B cell (primary cell): ENCODE measurements at regions of chr7 and their contacts with region 1.

Region 1: GRCh38 chr7:155598810-155599210 is 45.7 kb upstream of the RBM33 start:
- DNase-seq: peak; percentile 81
- ATAC-seq: peak; percentile 80
- H3K4me3 ChIP-seq: no peak overlapping the region
- H3K4me3 Mint-ChIP-seq: no peak overlapping the region
- H3K27ac ChIP-seq: no peak overlapping the region
- H3K27ac Mint-ChIP-seq: no peak overlapping the region
- H3K4me1 ChIP-seq: peaks cover 3 to 4% of the 10 kb centered on the region in 2 donors
- H3K4me1 Mint-ChIP-seq: peaks cover 3% of the 10 kb centered on the region
- H3K27me3 ChIP-seq: peaks cover 0 to 10% (median 8%) of the 10 kb centered on the region in 4 experiments
- H3K27me3 Mint-ChIP-seq: peaks cover 29% of the 10 kb centered on the region
- CTCF ChIP-seq: peak; percentile 99

Region 2: DNA sequence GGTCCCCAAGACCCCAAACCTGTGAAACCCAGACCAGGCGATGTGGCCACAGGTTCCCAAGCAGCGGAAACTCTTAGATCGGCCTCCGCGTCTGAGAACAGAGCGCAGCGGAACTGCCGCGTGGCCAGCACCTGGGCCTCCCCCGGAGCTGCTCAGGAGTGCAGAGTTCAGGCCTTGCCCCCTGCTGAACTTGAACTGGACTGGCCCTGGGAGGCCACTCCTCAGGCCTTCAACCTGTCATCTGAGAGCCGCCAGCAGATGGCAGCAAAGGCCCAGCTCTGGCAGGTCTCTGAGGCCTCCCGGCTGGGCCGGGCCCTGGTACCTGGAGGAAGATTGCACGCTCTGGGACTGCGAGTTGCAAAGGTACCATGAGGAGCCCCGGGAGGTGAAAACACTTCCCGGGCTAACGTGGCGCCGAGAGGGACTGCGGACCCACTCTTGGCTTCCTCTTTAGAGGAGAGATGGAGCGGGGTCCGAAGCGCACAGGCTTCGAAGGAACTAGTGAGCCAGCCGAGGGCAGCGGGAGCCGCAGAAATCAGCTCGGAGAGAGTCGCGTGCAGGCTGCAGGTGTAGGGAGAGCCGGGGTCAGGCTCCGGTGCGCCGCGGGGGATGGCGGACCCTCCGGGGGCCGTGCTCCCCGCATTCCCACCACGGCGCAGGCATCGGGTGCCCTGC is 685.0 kb before region 1 on chr7:
- CTCF ChIA-PET with region 1: interaction called, 5 read pairs
- POLR2A ChIA-PET with region 1: no interaction called
- intact Hi-C with region 1: loop called (anchors 5 kb)
- DNase-seq: peak; percentile 86
- ATAC-seq: peak; percentile 97
- H3K4me3 ChIP-seq: peak overlapping the region in 4 of 5 experiments; percentile 38 to 64 (median 50)
- H3K4me3 Mint-ChIP-seq: peak overlapping the region; percentile 92
- H3K27ac ChIP-seq: no peak overlapping the region
- H3K27ac Mint-ChIP-seq: no peak overlapping the region
- H3K4me1 ChIP-seq: peaks cover 7 to 9% of the 10 kb centered on the region in 2 donors
- H3K4me1 Mint-ChIP-seq: peaks cover 5% of the 10 kb centered on the region
- H3K27me3 ChIP-seq: peaks cover 0 to 20% (median 9%) of the 10 kb centered on the region in 4 experiments
- H3K27me3 Mint-ChIP-seq: peaks cover 45% of the 10 kb centered on the region
- CTCF ChIP-seq: peak; percentile 96

Region 3: GRCh38 chr7:155090684-155091083 is 508.1 kb before region 1 on chr7:
- CTCF ChIA-PET with region 1: no interaction called
- POLR2A ChIA-PET with region 1: no interaction called
- intact Hi-C with region 1: no loop called
- DNase-seq: no peak
- ATAC-seq: no peak
- H3K4me3 ChIP-seq: no peak overlapping the region
- H3K4me3 Mint-ChIP-seq: no peak overlapping the region
- H3K27ac ChIP-seq: no peak overlapping the region
- H3K27ac Mint-ChIP-seq: no peak overlapping the region
- H3K4me1 ChIP-seq: no peaks in the 10 kb centered on the region
- H3K4me1 Mint-ChIP-seq: no peaks in the 10 kb centered on the region
- H3K27me3 ChIP-seq: peaks cover 0 to 3% (median 0%) of the 10 kb centered on the region in 4 experiments
- H3K27me3 Mint-ChIP-seq: peaks cover 19% of the 10 kb centered on the region
- CTCF ChIP-seq: no peak

Region 4: DNA sequence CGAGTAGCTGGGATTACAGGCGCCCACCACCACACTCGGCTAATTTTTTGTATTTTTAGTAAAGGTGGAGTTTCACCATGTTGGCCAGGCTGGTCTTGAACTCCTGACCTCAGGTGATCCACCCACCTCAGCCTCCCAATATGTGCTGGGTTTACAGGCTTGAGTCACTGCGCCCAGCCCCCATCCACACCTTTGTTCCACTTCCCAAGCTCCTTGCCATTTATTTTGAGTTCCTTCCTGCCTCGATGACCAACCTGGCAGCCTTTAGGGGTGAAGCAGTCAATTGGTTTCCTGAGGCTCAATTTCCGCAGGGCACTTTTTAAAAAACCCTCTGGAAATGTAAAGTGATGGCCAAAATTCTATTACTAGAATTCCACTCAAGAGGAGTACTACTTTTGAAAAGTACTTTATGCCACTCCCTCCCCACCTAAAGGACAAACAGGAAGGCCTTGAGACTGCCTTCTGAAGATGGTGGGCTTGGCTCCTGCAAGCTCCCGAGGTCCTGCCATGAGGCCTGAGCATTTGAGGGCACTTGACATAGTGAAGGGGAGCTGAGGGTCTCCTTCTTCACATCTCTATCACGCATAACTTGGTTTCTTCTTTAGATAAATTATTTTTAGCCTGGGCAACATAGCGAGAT is 13.1 kb after region 1 on chr7:
- CTCF ChIA-PET with region 1: interaction called, 15 read pairs
- POLR2A ChIA-PET with region 1: no interaction called
- intact Hi-C with region 1: no loop called
- DNase-seq: no peak
- ATAC-seq: no peak
- H3K4me3 ChIP-seq: no peak overlapping the region
- H3K4me3 Mint-ChIP-seq: no peak overlapping the region
- H3K27ac ChIP-seq: no peak overlapping the region
- H3K27ac Mint-ChIP-seq: no peak overlapping the region
- H3K4me1 ChIP-seq: peaks cover 0 to 3% of the 10 kb centered on the region in 2 donors
- H3K4me1 Mint-ChIP-seq: peaks cover 15% of the 10 kb centered on the region
- H3K27me3 ChIP-seq: peaks cover 0 to 4% (median 0%) of the 10 kb centered on the region in 4 experiments
- H3K27me3 Mint-ChIP-seq: peaks cover 9% of the 10 kb centered on the region
- CTCF ChIP-seq: no peak

Region 5: DNA sequence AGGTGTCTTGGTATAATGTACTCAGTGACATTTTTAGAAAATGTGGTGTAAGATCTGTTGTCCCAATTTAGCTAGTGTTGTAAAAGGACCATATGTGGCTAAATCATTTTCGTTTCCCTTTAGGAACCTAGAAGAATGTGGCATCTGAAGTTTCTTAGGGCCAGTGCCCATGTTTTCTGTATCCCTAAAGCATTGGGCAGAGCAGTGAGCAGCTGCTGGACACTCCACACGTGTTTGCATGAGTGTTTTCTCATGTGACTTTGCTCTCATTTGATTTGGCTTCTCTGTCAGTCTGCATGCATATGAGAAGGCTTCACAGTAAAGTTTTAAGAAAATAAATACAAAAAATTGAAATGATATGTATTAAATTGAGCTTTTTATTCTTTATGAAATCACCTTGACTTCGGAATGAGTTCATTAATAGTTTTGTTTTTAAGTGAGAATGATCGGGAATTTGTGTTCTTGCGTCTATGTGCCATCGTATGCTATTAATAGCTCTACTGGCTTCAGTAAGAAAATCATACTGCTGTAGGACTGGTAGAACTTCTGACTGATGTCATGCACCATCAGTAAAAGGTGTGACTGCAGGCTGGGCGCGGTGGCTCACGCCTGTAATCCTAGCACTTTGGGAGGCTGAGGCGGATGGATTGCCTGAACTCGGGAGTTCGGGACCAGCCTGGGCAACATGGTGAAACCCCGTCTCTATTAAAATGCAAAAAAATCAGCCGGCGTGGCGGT is 107.0 kb after region 1 on chr7:
- CTCF ChIA-PET with region 1: interaction called, 10 read pairs
- POLR2A ChIA-PET with region 1: no interaction called
- intact Hi-C with region 1: no loop called
- DNase-seq: no peak
- ATAC-seq: no peak
- H3K4me3 ChIP-seq: no peak overlapping the region
- H3K4me3 Mint-ChIP-seq: no peak overlapping the region
- H3K27ac ChIP-seq: no peak overlapping the region
- H3K27ac Mint-ChIP-seq: no peak overlapping the region
- H3K4me1 ChIP-seq: peaks cover 9 to 11% of the 10 kb centered on the region in 2 donors
- H3K4me1 Mint-ChIP-seq: peaks cover 2% of the 10 kb centered on the region
- H3K27me3 ChIP-seq: no peaks in the 10 kb centered on the region
- H3K27me3 Mint-ChIP-seq: no peaks in the 10 kb centered on the region
- CTCF ChIP-seq: no peak

Region 6: GRCh38 chr7:155738652-155739537 is 140.1 kb after region 1 on chr7:
- CTCF ChIA-PET with region 1: interaction called, 242 read pairs
- POLR2A ChIA-PET with region 1: interaction called, 3 read pairs
- intact Hi-C with region 1: loop called (anchors 1 kb)
- DNase-seq: peak; percentile 81
- ATAC-seq: peak; percentile 36
- H3K4me3 ChIP-seq: no peak overlapping the region
- H3K4me3 Mint-ChIP-seq: no peak overlapping the region
- H3K27ac ChIP-seq: no peak overlapping the region
- H3K27ac Mint-ChIP-seq: peak overlapping the region; percentile 7
- H3K4me1 ChIP-seq: peaks cover 3 to 7% of the 10 kb centered on the region in 2 donors
- H3K4me1 Mint-ChIP-seq: peaks cover 44% of the 10 kb centered on the region
- H3K27me3 ChIP-seq: no peaks in the 10 kb centered on the region
- H3K27me3 Mint-ChIP-seq: no peaks in the 10 kb centered on the region
- CTCF ChIP-seq: peak; percentile 81

Region 7: DNA sequence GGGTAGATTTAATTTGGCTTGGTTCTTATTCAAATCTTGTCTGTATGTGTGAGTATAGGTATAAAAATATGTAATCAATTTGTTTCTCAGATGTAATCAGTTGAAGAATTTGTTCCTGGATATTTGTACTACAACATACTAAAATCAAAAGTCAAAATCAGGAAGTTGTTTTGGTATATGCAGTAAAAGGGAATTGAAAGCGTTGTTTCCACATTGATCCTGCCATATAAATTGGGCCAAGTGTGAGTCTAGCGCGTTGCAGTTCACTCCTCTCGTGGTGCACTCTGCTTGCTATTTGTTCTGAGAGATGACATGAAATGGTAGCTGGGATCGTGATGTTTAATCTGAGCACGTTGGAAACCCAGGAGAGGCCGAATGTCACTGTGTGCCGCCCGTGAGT is 157.5 kb after region 1 on chr7:
- CTCF ChIA-PET with region 1: interaction called, 16 read pairs
- POLR2A ChIA-PET with region 1: no interaction called
- intact Hi-C with region 1: no loop called
- DNase-seq: peak; percentile 47
- ATAC-seq: peak; percentile 62
- H3K4me3 ChIP-seq: no peak overlapping the region
- H3K4me3 Mint-ChIP-seq: peak overlapping the region; percentile 77
- H3K27ac ChIP-seq: peak overlapping the region in 1 of 2 donors; percentile 38
- H3K27ac Mint-ChIP-seq: peak overlapping the region; percentile 91
- H3K4me1 ChIP-seq: peaks cover 31 to 37% of the 10 kb centered on the region in 2 donors
- H3K4me1 Mint-ChIP-seq: peaks cover 65% of the 10 kb centered on the region
- H3K27me3 ChIP-seq: no peaks in the 10 kb centered on the region
- H3K27me3 Mint-ChIP-seq: no peaks in the 10 kb centered on the region
- CTCF ChIP-seq: no peak

Region 8: DNA sequence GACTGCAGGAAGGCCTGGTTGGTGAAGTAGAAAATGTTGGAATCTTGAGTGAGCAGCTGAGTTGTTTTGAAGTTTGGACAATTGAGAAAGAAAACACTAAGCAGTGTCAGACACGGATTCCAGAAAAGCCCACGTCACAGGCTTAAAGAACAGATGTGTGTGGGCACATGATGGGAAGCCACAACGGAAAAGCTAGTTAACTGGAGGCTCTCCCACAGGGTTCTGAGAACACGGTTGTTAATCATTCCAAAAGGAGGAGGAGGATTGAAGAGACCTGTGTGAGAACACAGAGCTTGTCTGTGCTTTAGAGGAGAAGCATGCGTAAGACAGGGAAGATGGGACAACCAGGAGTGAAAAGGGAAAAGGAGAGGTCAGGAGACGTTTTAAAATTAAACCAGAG is 170.9 kb after region 1 on chr7:
- CTCF ChIA-PET with region 1: interaction called, 199 read pairs
- POLR2A ChIA-PET with region 1: no interaction called
- intact Hi-C with region 1: loop called (anchors 1 kb)
- DNase-seq: no peak
- ATAC-seq: no peak
- H3K4me3 ChIP-seq: no peak overlapping the region
- H3K4me3 Mint-ChIP-seq: no peak overlapping the region
- H3K27ac ChIP-seq: no peak overlapping the region
- H3K27ac Mint-ChIP-seq: no peak overlapping the region
- H3K4me1 ChIP-seq: peaks cover 0 to 2% of the 10 kb centered on the region in 2 donors
- H3K4me1 Mint-ChIP-seq: peaks cover 3% of the 10 kb centered on the region
- H3K27me3 ChIP-seq: no peaks in the 10 kb centered on the region
- H3K27me3 Mint-ChIP-seq: no peaks in the 10 kb centered on the region
- CTCF ChIP-seq: no peak